ENCODE measurements at regions of chr14 and their contacts with region 1.

Region 1: GRCh38 chr14:68788996-68789820 is 3.7 kb downstream of the ZFP36L1 start:
- DNase-seq: peak; percentile 94
- ATAC-seq: peak; percentile 41
- H3K4me3 Mint-ChIP-seq: peak overlapping the region; percentile 87
- H3K27ac Mint-ChIP-seq: peak overlapping the region; percentile 100
- H3K4me1 Mint-ChIP-seq: peaks cover 63% of the 10 kb centered on the region
- H3K27me3 Mint-ChIP-seq: no peaks in the 10 kb centered on the region

Region 2: DNA sequence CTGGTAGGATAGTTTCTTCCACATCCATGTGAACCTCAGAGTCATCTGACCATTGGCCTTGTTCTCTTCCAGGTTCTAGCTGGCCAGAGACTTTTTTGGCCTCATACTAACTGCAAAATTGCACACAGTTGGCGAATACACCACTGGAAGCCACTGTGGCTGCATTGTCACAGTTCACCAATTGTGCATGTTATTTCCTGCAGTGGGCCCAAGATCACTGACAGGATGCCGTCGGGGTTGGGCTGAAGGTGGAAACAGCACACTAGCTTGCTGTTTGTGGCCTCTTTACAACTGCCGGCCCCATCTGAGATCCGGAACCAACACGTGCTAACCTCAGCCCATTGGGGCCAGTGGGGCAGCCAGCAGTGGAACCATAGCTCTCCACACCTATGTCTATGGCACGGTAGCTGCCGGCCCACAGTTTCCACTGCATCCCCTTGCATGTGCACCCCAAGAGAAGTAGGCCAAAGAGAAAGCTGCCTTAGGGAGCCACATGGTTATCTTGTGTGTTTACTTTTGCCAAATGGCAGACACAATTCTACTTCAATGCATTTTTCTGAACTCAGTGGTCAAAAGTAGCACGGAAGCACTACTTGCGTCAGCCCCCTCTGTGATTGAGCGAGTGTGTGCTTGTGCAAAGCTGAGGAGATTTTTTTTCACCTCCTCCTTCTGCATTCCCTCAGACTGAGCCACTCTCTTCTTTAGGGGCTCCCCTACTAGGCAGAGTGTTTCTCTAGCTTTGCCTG is 505.7 kb before region 1 on chr14:
- CTCF ChIA-PET with region 1: interaction called, 22 read pairs
- POLR2A ChIA-PET with region 1: interaction called, 7 read pairs
- DNase-seq: peak; percentile 84
- ATAC-seq: peak; percentile 78
- H3K4me3 Mint-ChIP-seq: peak overlapping the region; percentile 57
- H3K27ac Mint-ChIP-seq: peak overlapping the region; percentile 98
- H3K4me1 Mint-ChIP-seq: peaks cover 50% of the 10 kb centered on the region
- H3K27me3 Mint-ChIP-seq: no peaks in the 10 kb centered on the region

Region 3: DNA sequence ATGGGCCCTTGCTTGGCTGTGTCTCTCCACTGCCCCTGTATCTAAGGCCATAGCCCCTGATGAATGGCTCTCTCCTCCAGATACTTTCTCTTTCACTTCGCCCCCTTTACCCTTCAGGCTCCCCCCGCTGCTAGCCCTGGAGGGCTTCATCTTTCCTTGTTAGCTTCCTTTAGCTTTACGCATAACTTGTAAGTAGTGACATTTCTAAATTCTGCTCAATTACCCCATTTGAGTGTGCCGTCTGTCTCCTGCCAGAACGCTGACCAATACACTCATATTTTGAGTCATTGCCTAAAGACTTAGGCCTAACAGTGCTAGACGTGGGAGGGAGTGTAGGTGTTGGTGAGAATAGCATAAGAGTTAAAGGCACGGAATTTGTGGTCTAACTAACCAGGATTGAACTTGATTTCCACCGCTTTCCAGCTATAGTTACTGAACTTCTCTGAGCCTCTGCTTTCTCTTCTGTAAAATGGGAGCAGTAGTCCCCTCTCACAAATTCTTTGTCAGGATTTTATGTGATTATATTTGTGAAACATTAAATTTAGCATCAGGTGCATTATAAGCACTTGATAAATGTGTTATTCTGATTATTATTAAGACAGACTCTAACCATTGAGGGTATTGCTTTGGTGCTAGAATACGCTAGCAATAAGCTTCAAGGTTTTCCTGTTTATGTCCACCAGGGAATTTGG is 125.7 kb before region 1 on chr14:
- CTCF ChIA-PET with region 1: interaction called, 30 read pairs
- POLR2A ChIA-PET with region 1: interaction called, 5 read pairs
- DNase-seq: peak; percentile 30
- ATAC-seq: peak; percentile 70
- H3K4me3 Mint-ChIP-seq: peak overlapping the region; percentile 57
- H3K27ac Mint-ChIP-seq: peak overlapping the region; percentile 69
- H3K4me1 Mint-ChIP-seq: peaks cover 23% of the 10 kb centered on the region
- H3K27me3 Mint-ChIP-seq: no peaks in the 10 kb centered on the region

Region 4: DNA sequence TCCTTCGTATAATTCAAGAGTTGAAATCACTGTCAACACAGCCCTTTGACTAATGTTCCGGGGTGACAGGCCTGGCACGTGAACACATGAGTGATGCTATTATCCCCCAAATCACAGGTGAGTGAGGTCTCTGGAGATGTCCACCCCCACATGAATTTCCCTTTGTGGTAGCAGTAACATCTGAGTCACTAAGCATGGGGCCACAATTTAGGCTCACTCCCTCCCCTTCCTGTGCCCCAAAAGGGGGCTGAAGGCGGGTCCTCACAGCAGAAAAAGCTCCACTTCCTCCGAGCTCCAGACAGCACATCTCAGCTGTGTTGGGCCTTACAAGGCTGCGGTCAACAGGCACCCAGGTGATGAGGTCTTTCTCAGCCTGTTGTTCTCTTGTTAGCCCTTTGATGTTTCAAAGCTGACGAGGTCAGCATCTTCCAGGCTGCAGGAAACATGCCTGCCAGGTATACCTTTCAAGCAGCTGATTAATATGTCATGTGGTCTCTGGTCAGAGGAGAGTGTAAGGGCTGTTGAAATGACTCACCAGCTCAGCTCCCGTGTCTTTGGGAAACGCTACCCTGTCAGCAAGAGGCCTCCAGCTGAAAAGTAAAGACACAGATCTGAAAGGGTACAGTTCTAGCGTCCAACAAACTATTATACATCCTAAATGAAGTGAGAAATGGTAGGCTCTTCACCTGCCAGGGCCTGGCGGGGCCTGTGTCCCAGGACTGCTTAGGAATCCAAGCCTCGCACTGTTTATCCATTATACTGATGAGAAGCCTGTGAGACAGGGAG is 103.6 kb before region 1 on chr14:
- CTCF ChIA-PET with region 1: interaction called, 13 read pairs
- POLR2A ChIA-PET with region 1: interaction called, 11 read pairs
- DNase-seq: peak; percentile 88
- ATAC-seq: peak; percentile 89
- H3K4me3 Mint-ChIP-seq: peak overlapping the region; percentile 22
- H3K27ac Mint-ChIP-seq: peak overlapping the region; percentile 88
- H3K4me1 Mint-ChIP-seq: peaks cover 55% of the 10 kb centered on the region
- H3K27me3 Mint-ChIP-seq: peaks cover 6% of the 10 kb centered on the region

Region 5: DNA sequence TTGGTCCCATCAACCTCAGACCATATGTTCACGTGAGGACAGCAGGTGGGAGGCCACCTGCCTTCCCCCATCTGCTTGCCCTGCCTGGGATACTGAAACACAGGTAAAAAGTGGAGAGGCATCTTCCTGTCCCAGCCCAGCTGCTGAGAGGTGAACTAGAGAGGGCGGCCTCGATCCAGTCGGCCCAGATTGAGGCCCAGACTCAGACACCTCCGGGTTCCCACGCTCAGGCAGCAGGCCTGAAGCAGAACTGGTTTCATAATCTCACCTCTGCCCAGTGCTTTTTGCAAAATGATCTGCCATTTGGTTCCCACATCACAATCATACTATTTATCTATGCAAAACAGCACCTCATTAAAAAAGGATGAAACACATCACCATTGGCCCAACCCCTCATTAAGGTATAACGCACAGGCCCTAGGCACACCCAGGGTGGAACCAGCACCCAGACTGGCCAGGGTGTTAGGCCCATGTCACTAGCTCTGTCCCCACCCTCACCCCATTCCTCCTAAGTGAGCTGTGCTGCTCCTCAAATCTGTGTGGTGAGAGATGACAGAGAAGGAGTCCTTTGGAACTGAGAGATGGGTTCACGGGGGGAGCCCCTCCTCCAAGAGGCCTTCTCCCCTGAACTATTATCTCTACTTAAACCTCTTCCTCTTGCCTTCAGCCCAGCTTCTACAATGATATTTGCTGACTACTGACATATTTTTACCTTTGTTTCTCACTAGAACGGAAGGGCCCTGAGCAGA is 77.5 kb before region 1 on chr14:
- CTCF ChIA-PET with region 1: interaction called, 19 read pairs
- POLR2A ChIA-PET with region 1: no interaction called
- DNase-seq: no peak
- ATAC-seq: no peak
- H3K4me3 Mint-ChIP-seq: no peak overlapping the region
- H3K27ac Mint-ChIP-seq: no peak overlapping the region
- H3K4me1 Mint-ChIP-seq: peaks cover 16% of the 10 kb centered on the region
- H3K27me3 Mint-ChIP-seq: peaks cover under 1% of the 10 kb centered on the region

Region 6: GRCh38 chr14:68718023-68718995 is 70.9 kb before region 1 on chr14:
- CTCF ChIA-PET with region 1: interaction called, 25 read pairs
- POLR2A ChIA-PET with region 1: interaction called, 4 read pairs
- DNase-seq: no peak
- ATAC-seq: no peak
- H3K4me3 Mint-ChIP-seq: no peak overlapping the region
- H3K27ac Mint-ChIP-seq: no peak overlapping the region
- H3K4me1 Mint-ChIP-seq: peaks cover 32% of the 10 kb centered on the region
- H3K27me3 Mint-ChIP-seq: peaks cover 8% of the 10 kb centered on the region

Region 7: DNA sequence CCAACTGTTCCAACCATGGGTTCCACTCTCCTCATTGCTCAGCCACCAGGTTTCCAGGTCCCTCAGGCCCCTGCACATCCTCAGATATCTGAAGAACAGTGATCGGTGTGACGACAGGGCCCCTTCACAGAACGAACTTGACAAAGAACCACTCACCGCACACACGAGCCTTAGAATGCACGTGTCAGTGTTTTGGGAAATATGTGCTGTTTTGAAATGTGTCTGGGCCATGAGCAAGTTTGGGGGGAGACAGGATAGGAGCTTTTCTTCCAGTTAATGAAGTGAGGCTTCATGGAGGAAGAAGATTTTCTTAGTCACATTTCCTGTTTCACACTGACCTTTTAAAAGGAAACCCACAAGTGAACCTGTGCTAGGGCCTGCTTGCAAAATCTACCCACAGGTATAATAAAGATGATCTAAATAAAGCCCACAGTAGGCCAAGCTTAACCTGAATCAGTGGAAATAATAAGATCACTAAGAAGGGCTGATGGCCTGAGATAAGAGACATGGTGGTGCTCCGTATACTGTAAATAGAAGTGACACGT is 54.9 kb before region 1 on chr14:
- CTCF ChIA-PET with region 1: interaction called, 33 read pairs
- POLR2A ChIA-PET with region 1: interaction called, 11 read pairs
- DNase-seq: peak; percentile 57
- ATAC-seq: peak; percentile 82
- H3K4me3 Mint-ChIP-seq: peak overlapping the region; percentile 16
- H3K27ac Mint-ChIP-seq: peak overlapping the region; percentile 70
- H3K4me1 Mint-ChIP-seq: peaks cover 38% of the 10 kb centered on the region
- H3K27me3 Mint-ChIP-seq: no peaks in the 10 kb centered on the region

Region 8: GRCh38 chr14:68748691-68749090 is 40.5 kb before region 1 on chr14:
- CTCF ChIA-PET with region 1: no interaction called
- POLR2A ChIA-PET with region 1: no interaction called
- DNase-seq: no peak
- ATAC-seq: no peak
- H3K4me3 Mint-ChIP-seq: no peak overlapping the region
- H3K27ac Mint-ChIP-seq: no peak overlapping the region
- H3K4me1 Mint-ChIP-seq: no peaks in the 10 kb centered on the region
- H3K27me3 Mint-ChIP-seq: peaks cover 9% of the 10 kb centered on the region

Region 9: GRCh38 chr14:68862954-68863594 is 73.9 kb after region 1 on chr14:
- CTCF ChIA-PET with region 1: no interaction called
- POLR2A ChIA-PET with region 1: no interaction called
- DNase-seq: peak; percentile 84
- ATAC-seq: peak; percentile 67
- H3K4me3 Mint-ChIP-seq: no peak overlapping the region
- H3K27ac Mint-ChIP-seq: no peak overlapping the region
- H3K4me1 Mint-ChIP-seq: peaks cover 2% of the 10 kb centered on the region
- H3K27me3 Mint-ChIP-seq: no peaks in the 10 kb centered on the region

Measured in activated CD8-positive, alpha-beta T cell treated with anti-CD3 and anti-CD28 coated beads, Interleukin-2, amount 10 ng/mL, durations not matched to agents 7 days and 5 days (primary cell).